Breast epithelium (tissue), 4 donors: ENCODE measurements at regions of chr20 and their contacts with region 1.

Region 1: DNA sequence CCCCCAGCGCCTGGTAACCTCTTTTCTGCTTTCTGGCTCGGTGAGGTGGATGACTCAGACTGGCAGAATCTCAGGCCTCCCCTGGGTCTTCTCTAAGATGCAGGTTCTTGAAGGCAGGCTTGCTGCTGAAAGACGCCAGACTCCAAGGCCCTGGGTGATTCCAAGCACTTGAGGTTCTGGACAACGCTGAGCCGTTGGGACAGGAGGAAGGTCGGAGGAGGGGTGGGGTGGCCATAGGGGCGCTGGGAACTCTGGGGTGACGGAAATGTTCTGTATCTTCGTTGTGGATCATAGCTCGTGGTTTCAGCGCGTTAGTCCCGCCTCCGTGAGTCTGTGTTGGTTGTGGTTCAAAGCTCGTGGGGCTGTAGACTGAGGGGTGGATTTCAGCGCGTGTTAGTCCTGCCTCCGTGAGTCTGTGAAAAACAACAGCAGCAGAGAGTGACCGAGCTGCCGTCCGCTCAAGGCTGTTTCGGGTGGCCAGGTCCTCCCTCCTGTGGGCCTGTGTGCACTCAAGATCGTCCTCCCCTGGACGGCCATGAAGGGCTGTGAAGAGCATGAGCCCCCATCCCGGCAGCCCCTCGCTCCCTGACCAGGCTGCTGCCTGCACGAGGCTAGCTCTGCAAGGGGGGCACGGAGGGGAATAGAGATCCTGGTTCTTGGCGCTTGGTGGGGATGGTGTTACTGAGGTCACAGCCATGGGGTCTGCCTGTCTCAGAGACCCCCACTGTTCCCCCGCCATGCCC is 7.7 kb downstream of the NTSR1 start:
- DNase-seq: no peak
- H3K4me3 ChIP-seq: no peak overlapping the region
- H3K27ac ChIP-seq: no peak overlapping the region
- H3K4me1 ChIP-seq: no peaks in the 10 kb centered on the region
- H3K27me3 ChIP-seq: peaks cover 0 to 31% of the 10 kb centered on the region in 2 donors
- CTCF ChIP-seq: no peak
- POLR2A ChIP-seq: no peak

Region 2: GRCh38 chr20:62740286-62741141 is 24.1 kb after region 1 on chr20:
- intact Hi-C with region 1: no loop called
- DNase-seq: peak in 1 of 2 donors; percentile 38
- H3K4me3 ChIP-seq: peak overlapping the region in 1 of 3 donors; percentile 25
- H3K27ac ChIP-seq: peak overlapping the region in 1 of 2 donors; percentile 58
- H3K4me1 ChIP-seq: no peaks in the 10 kb centered on the region
- H3K27me3 ChIP-seq: peaks cover 0 to 84% of the 10 kb centered on the region in 2 donors
- CTCF ChIP-seq: no peak
- POLR2A ChIP-seq: no peak

Region 3: GRCh38 chr20:63178889-63179686 is 462.7 kb after region 1 on chr20:
- intact Hi-C with region 1: loop called (anchors 5 kb)
- DNase-seq: no peak
- H3K4me3 ChIP-seq: peak overlapping the region in 2 of 3 donors; percentile 30 to 56
- H3K27ac ChIP-seq: no peak overlapping the region
- H3K4me1 ChIP-seq: peaks cover 15 to 18% of the 10 kb centered on the region in 2 donors
- H3K27me3 ChIP-seq: peaks cover 18 to 96% of the 10 kb centered on the region in 2 donors
- CTCF ChIP-seq: no peak
- POLR2A ChIP-seq: no peak